Activated CD4-positive, alpha-beta memory T cell treated with anti-CD3 and anti-CD28 coated beads for 36 hours (primary cell): ENCODE measurements at regions of chr1 and their contacts with region 1.

Region 1: GRCh38 chr1:246566128-246566812 is at the starts of genes CNST and TFB2M:
- DNase-seq: peak; percentile 98
- H3K4me3 Mint-ChIP-seq: peak within 1 kb of the TSS; percentile 90
- H3K27ac Mint-ChIP-seq: peak within 1 kb of the TSS; percentile 91
- H3K4me1 Mint-ChIP-seq: peaks cover 42% of the 10 kb centered on the region
- H3K27me3 Mint-ChIP-seq: no peaks in the 10 kb centered on the region
- total RNA-seq, gene CNST: 25.9 TPM
- total RNA-seq, gene TFB2M: 13.6 to 14.5 TPM

Region 2: GRCh38 chr1:244652699-244653466 is 1913.4 kb before region 1 on chr1 and contains the start of gene DESI2:
- CTCF ChIA-PET with region 1: no interaction called
- POLR2A ChIA-PET with region 1: no interaction called
- intact Hi-C with region 1: loop called (anchors 2 kb)
- DNase-seq: peak; percentile 98
- H3K4me3 Mint-ChIP-seq: peak within 1 kb of the TSS; percentile 79
- H3K27ac Mint-ChIP-seq: peak within 1 kb of the TSS; percentile 79
- H3K4me1 Mint-ChIP-seq: peaks cover 22% of the 10 kb centered on the region
- H3K27me3 Mint-ChIP-seq: no peaks in the 10 kb centered on the region
- total RNA-seq, gene DESI2: 24.8 to 25.6 TPM

Region 3: DNA sequence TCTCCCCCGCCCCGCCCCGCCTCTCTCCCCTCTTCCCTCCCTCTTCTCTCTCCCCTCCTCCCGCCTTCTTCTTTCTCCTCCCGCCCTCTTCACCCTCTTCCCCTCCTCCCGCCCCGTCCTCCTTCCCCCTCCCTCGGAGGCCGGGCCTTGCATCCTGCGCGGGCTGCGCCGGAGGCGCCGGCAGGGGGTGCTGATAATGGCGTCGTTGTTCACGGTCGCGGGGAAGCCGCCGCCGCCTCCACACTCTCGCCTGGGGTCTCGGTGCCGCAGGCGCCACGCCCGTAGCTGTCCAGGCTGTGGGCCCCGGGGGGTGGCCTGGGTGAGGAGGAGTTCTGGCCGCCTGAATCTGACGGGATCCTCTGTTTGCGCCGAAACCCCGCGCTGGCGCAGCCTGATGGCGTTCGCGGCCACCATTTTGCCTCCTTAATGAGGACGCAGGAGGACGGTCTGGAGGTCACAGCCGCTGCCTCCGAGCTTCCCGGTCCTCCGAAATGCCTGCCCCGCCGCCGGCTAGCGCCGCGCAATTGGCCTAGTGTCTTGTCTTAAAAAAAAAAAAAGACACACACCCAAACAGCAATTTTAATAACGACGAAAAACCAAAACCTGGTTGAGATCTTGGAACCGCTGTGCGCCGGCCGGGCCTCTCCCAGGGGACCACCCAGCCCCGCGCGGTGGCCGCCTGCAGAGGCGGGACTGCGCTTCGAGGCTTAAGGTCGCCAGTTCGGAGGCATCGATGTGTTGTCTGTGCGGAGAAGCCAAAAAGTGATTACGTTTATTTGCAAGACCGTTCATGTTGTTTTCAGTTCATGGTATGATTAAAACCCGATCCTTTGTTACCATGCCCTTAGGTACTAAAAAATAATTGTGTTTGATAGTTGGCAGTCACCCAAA is 1595.4 kb before region 1 on chr1:
- CTCF ChIA-PET with region 1: no interaction called
- POLR2A ChIA-PET with region 1: no interaction called
- intact Hi-C with region 1: loop called (anchors 5 kb)
- DNase-seq: peak; percentile 93
- H3K4me3 Mint-ChIP-seq: peak overlapping the region; percentile 89
- H3K27ac Mint-ChIP-seq: peak overlapping the region; percentile 98
- H3K4me1 Mint-ChIP-seq: peaks cover 18% of the 10 kb centered on the region
- H3K27me3 Mint-ChIP-seq: no peaks in the 10 kb centered on the region

Region 4: DNA sequence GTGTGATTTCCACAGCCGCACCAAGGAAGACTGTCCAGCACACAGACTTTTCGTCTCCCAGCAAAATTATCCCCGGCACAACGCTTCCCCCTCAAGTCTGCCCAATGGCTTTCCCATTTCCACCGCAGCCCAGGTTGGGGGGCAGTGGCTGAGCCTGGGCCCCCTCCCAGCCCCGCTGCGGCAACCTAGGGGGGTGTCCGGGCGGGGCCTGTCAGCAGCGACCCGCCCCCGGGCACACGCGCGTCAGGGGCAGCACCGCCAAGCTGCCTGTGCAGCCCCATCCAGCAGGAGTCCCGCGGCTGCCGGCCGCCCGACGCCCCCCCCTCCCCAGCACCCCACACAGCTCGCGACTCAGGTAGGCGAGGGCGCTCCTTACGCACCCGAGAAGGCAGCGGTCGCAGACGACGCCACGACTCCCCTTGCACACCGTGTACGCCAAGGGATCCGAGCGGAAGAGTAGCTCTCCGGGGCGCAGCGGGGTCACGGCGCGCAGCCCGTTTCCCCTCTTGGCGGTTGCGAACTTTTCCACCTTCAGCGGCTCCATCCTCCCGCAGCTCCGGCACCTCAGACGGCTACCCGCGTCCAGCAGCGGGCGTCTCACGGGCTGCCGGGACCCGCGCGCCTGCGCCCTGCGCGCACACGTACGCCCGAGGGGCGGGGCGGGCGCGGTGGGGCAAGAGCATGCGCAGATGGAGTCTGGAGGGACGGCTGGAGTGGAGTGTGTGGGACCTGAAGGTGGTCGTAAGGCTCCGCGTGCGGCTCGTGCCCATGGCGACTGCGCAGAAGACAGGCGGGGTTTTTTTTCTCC is 59.4 kb before region 1 on chr1 and contains the start of gene SMYD3:
- CTCF ChIA-PET with region 1: interaction called, 3 read pairs
- POLR2A ChIA-PET with region 1: interaction called, 3 read pairs
- intact Hi-C with region 1: loop called (anchors 2 kb)
- DNase-seq: peak; percentile 81
- H3K4me3 Mint-ChIP-seq: peak within 1 kb of the TSS; percentile 88
- H3K27ac Mint-ChIP-seq: peak within 1 kb of the TSS; percentile 82
- H3K4me1 Mint-ChIP-seq: peaks cover 27% of the 10 kb centered on the region
- H3K27me3 Mint-ChIP-seq: no peaks in the 10 kb centered on the region
- total RNA-seq, gene SMYD3: 16.6 to 20.2 TPM

Region 5: GRCh38 chr1:246527402-246528088 is 38.7 kb before region 1 on chr1:
- CTCF ChIA-PET with region 1: no interaction called
- POLR2A ChIA-PET with region 1: no interaction called
- intact Hi-C with region 1: no loop called
- DNase-seq: no peak
- H3K4me3 Mint-ChIP-seq: no peak overlapping the region
- H3K27ac Mint-ChIP-seq: no peak overlapping the region
- H3K4me1 Mint-ChIP-seq: peaks cover 5% of the 10 kb centered on the region
- H3K27me3 Mint-ChIP-seq: no peaks in the 10 kb centered on the region

Region 6: DNA sequence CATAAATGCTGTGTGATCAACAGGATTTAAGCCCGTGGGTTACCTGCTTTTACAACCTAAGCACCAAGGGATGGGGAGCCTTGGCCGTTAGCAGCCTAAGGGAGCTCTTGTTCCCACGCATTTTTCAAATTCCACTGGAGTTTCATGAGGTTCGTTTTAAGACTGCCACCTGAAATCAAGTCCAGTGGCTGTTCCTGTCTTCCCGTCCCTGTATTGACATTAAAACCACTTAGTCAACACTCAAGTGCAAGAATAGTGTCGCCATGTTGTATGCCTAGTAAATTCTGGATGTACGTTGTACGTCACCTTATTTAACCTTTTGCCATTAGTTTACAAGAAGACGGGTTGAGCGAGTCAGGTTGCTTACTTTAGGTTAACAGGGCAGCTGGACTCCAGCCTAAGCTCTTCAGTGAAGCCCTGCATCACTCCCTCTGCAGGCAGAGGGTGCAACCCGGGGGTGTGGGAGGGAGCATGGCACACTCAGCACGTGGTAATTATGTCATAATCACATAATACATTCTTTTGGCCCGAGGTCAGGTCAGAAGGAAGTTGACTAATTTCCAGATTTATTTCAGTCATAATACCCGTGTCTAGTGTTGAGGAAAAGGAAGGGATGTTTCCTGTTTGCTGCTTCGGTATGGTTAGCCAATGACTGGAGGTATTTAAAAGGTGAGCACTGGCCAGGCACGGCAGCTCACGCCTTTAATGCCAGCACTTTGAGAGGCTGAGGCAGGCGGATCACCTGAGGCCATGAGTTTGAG is 42.5 kb after region 1 on chr1:
- CTCF ChIA-PET with region 1: no interaction called
- POLR2A ChIA-PET with region 1: interaction called, 3 read pairs
- intact Hi-C with region 1: loop called (anchors 2 kb)
- DNase-seq: peak; percentile 63
- H3K4me3 Mint-ChIP-seq: no peak overlapping the region
- H3K27ac Mint-ChIP-seq: peak overlapping the region; percentile 54
- H3K4me1 Mint-ChIP-seq: peaks cover 45% of the 10 kb centered on the region
- H3K27me3 Mint-ChIP-seq: no peaks in the 10 kb centered on the region

Region 7: DNA sequence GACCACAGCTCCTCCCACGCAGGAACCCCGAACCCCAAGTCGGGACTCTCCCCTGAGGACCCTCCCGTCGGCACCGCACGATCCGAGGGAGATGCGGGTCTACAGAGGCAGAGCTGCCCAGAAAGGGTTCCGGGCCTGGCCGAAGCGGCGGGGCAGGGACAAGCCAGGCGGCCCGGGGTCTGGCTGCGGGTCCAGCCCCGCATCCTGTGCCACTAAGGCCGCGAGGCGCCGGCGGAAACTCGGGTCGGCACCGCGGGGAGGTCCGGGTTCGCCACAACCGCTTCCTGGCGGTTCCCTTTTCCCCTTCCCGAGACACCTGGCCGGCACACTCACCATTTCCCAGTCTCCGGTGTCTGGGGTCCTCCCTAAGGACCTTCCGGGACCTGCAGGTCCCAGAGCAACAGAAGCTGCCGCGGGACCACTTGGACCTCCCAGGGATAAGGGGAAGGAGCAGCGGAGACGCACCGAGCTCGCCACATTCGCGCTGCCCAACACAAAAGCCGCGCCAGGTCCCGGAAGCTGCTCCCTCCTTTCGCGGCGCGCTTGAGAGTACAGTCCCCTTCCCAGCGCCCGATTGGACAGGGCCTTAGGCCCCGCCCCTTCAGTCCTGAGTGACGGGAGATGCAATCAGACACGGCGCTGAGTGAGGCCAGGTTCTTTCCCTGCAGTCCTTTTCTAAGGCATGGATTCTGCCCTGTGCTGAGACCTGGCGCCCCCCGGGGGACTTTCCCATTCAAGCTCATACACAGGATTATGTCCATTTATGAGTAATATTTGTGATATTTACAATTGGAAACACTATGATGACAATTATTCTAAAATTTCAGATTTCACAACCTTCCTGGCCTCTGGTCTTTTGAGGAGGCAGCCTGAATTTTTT is 512.2 kb after region 1 on chr1 and contains the start of gene ZNF670:
- CTCF ChIA-PET with region 1: no interaction called
- POLR2A ChIA-PET with region 1: no interaction called
- intact Hi-C with region 1: loop called (anchors 2 kb)
- DNase-seq: peak; percentile 96
- H3K4me3 Mint-ChIP-seq: peak within 1 kb of the TSS; percentile 90
- H3K27ac Mint-ChIP-seq: peak within 1 kb of the TSS; percentile 85
- H3K4me1 Mint-ChIP-seq: peaks cover 24% of the 10 kb centered on the region
- H3K27me3 Mint-ChIP-seq: peaks cover 3% of the 10 kb centered on the region
- total RNA-seq, gene ZNF670: 3.9 to 4.5 TPM

Region 8: DNA sequence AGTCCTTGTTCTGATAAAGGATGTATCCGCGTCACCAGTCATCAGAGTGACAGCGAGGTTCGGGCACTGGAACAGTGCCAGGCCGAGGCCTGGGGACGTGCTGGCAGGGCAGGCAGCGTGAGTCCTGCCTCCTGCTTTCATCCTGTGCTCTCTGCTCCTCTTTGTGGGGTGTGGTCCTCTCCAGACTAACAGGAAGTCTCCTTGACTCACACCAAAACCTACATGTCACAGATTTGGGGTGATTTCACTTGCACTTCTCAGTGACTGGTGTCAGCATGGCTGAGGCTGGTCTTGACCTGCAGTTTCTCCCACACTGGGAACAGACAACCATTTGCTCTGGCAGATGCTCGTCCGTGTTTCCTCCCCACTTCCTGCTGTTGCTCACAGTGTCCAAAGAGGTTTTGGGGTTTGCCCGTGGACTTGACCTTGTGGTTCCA is 840.9 kb after region 1 on chr1:
- CTCF ChIA-PET with region 1: no interaction called
- POLR2A ChIA-PET with region 1: no interaction called
- intact Hi-C with region 1: loop called (anchors 5 kb)
- DNase-seq: peak; percentile 82
- H3K4me3 Mint-ChIP-seq: peak overlapping the region; percentile 45
- H3K27ac Mint-ChIP-seq: peak overlapping the region; percentile 63
- H3K4me1 Mint-ChIP-seq: peaks cover 43% of the 10 kb centered on the region
- H3K27me3 Mint-ChIP-seq: peaks cover 6% of the 10 kb centered on the region